KBM-7 (cell line): ENCODE measurements at regions of chr9 and their contacts with region 1.

Region 1: DNA sequence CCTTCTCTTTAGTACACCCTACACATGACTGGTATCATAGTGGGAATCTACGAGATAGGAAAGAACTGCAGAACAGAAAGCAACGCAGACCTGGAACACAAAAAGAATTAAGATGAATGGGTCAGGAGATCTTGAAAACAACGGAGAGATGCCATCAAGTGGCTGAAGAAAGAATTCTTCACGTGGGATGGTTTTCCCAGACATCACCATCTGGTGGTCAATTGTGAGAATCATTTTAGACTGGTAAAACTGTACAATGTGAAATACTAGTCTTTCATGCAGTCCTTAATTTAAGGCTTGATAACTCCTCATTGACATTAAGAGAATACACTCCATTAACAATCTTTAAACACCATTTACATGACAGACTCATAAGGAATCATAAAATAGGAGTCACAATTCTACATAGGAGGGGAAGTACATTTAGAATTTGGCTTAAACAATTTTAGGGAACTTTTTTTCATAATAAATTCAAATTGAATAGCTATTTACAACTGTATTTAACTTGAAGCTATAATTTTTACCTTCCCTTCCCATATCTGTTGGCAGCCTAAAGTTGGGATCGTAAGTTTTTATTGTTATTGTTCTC is 128.4 kb upstream of the TRPM3 start:
- DNase-seq: peak; percentile 67

Region 2: GRCh38 chr9:70639853-70640814 is 609.7 kb before region 1 on chr9:
- in situ Hi-C with region 1: loop called (anchors 25 kb)
- DNase-seq: peak; percentile 64

Region 3: GRCh38 chr9:70924895-70925547 is 324.8 kb before region 1 on chr9:
- in situ Hi-C with region 1: loop called (anchors 25 kb)
- DNase-seq: peak; percentile 59

Region 4: GRCh38 chr9:71157731-71158130 is 92.1 kb before region 1 on chr9:
- in situ Hi-C with region 1: no loop called
- DNase-seq: no peak

Region 5: DNA sequence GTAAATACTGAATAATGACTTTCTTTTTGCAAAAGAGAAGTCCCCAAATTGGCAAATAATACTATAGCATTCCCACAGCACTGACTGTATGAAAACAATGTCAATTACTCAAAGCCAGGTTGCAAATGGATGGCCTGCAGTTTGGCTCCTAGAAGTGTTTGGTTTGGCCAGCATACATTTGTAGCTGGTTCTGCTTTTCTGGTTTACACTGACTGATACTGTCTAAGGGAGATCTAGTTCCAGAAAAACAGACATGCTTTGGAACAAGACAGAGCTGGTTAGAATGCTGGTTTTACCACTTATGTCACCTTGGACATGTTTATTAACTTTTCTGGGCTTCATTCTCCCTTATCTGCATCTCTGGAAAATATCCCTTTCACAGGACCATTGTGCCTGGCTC is 46.9 kb before region 1 on chr9:
- in situ Hi-C with region 1: no loop called
- DNase-seq: no peak

Region 6: DNA sequence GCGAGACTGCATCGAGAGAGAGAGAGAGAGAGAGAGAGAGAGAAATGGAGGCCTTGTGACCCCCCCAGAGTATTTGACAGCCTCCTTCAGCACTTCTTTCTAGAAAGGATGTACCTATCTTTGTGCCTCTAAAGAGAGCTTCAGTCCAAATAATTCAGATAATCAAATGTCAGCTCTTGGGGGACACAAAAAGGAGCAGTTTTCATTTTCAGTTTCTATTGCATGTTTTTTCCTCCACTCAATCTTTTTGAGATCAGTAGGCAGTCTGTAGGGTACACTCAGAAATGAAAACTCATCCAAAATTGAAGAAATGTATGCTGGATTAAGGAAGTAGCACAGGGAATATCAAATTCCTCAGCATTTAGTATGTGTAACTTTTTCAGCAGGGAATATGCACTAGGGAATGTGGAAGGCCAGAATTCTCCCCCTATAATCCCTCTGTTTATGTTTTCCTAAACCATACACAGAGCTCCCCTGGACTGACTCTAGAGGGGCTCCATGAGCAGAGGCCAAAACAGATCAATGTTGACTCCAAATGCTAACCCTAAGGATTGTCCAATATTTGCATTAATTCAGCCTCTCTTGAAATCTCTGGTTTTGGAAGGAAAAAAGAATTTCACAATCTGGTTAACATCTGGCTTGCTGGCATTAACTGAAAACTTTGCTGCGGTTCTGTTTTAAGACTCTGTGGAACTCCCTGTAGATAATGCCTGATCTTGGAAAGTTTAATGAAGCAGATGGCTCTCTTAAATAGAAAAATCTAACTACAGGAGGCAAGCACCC is 268.4 kb after region 1 on chr9:
- in situ Hi-C with region 1: no loop called
- DNase-seq: no peak